ENCODE measurements at regions of chr15 and their contacts with region 1.

Region 1: DNA sequence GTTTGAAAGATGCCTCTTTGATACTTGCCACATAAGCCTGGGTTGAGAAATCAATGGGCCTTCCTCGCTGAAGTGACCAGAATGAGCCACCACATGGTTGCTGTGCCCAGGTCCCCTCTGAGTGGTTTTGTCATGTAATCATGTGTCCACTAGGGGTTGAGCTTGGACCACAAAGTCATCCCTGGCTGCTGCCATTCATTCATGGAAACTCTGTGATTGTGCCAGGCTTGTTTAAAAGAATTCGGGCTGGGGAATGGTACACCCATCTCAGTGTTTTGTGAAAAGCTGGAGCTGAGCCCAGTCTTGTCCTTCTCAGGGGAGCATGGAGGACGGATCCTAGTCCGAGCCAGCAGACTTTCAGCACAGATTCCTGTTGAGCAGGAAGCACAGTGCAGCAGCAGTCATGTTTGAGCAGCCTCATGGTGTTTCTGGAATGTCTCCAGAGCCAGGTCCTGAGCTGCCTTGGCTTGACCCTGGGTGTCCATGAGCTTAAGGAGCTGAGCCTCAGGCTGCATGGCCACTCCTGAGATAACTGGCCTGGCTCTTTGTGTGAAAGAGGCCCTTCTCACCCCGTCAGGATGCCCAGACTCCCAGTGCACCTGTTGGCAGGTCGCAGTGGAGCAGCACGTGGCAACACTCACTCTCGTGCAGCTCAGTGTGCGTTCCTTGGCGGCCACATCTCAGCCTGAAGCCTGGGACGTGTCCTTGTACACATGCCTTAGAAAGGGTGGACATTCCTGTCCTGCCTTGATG is 260.3 kb upstream of the TPM1 start:
- DNase-seq: peak; percentile 71 to 92 (median 89)
- ATAC-seq: peak; percentile 90 to 93 (median 92)
- H3K4me3 ChIP-seq: no peak overlapping the region
- H3K27ac ChIP-seq: peak overlapping the region; percentile 27 to 88 (median 71)
- H3K4me1 ChIP-seq: peaks cover 3 to 57% (median 40%) of the 10 kb centered on the region in 12 donors
- H3K27me3 ChIP-seq: no peaks in the 10 kb centered on the region
- CTCF ChIP-seq: peak; percentile 51 to 83 (median 73)
- POLR2A ChIP-seq: no peak

Region 2: DNA sequence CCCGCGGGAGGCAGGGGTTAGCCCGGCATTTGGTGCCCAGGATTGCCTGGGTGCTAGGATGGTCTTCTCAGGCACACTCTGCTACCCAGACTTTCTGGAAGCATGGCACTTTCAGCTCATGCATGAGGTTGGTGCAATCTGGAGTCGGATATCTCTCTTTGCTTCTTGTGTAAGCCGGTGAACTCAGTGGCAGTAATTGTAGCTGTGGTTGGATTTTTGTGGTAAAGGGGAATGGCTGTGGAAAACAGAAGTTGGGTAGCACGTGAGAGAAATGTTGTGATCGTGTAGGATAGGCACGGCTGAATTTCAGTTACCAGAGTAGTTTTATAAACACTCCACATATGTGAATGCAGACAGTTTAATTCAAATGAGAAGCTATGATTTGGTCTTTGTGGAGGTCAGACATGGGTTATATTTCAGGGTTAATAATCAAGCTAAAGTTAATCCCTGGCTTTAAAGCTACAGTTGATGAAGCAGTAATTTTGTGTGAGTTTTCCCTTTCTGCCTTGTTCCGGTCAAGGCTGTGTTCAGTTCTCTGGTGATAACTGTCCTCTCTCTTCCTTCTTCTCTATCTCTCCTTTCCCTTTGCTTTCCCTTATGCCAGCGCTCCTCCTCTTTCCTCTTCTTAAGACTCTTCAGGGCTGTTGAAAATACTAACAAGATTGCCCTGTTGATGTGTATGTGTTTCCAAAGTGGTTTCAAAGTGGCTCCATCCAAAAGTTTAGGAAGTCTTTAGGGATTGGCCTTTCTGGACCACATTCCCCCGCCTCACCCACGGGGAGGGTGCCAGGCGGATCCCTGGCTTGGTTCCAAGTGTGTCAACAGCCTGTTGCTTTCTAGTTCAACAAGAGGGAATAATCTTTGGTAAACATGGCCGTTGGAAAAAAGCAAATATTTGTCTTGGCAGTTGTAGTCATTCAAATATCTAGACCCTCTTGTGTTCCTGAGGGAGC is 212.5 kb before region 1 on chr15:
- intact Hi-C with region 1: no loop called
- DNase-seq: peak; percentile 39 to 74 (median 68)
- ATAC-seq: peak in 3 of 4 donors; percentile 31 to 61 (median 32)
- H3K4me3 ChIP-seq: no peak overlapping the region
- H3K27ac ChIP-seq: peak overlapping the region in 3 of 12 donors; percentile 1 to 9 (median 1)
- H3K4me1 ChIP-seq: peaks cover 0 to 34% (median 15%) of the 10 kb centered on the region in 12 donors
- H3K27me3 ChIP-seq: no peaks in the 10 kb centered on the region
- CTCF ChIP-seq: no peak
- POLR2A ChIP-seq: no peak

Region 3: DNA sequence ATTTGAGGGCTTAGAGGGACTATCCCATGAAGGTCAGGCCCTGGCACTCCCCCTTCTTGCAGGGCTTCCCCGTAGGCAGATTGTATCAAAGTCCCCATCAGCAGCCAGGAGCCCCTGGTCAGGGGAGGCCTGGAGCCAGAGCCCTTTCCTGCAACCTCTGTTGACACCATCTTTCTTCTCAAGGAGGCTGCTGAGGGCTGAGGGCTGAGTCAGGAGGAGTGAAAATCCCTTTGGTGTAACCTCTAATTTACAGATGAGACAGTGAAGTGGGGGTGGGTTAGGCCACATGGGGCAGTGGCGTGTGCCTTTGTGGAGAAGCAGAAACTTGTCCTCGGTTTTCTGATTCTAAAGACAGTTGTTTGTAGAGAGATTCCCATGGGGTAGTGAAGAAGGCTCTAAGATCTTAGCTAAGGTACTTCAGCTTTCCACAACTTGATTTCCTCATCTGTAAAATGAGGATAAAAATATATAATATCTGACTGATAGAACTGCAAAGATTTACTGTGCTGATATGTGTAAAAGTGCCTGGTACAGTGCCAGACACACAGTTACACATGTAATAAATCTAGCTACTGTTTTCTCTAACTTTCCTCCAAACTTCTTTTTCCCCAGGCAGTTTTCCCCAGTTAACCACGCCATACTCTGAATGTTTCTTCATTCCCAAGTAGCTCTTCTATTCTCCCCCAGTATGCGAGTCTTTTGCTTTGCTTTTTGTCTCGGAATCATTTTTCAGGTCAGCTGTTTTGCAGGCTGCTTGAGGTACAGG is 11.0 kb after region 1 on chr15:
- intact Hi-C with region 1: no loop called
- DNase-seq: no peak
- ATAC-seq: no peak
- H3K4me3 ChIP-seq: no peak overlapping the region
- H3K27ac ChIP-seq: no peak overlapping the region
- H3K4me1 ChIP-seq: peaks cover 0 to 12% (median 0%) of the 10 kb centered on the region in 12 donors
- H3K27me3 ChIP-seq: no peaks in the 10 kb centered on the region
- CTCF ChIP-seq: no peak
- POLR2A ChIP-seq: no peak

Region 4: GRCh38 chr15:62809112-62809967 is 27.1 kb after region 1 on chr15:
- intact Hi-C with region 1: loop called in 1 of 10 experiments (anchors 2 kb)
- DNase-seq: no peak
- ATAC-seq: no peak
- H3K4me3 ChIP-seq: no peak overlapping the region
- H3K27ac ChIP-seq: no peak overlapping the region
- H3K4me1 ChIP-seq: peaks cover 0 to 5% (median 0%) of the 10 kb centered on the region in 12 donors
- H3K27me3 ChIP-seq: no peaks in the 10 kb centered on the region
- CTCF ChIP-seq: no peak
- POLR2A ChIP-seq: no peak

Region 5: GRCh38 chr15:62847900-62848489 is 65.8 kb after region 1 on chr15:
- intact Hi-C with region 1: loop called in 8 of 10 experiments (anchors 2 to 10 kb)
- DNase-seq: peak; percentile 64 to 84 (median 75)
- ATAC-seq: peak; percentile 35 to 80 (median 73)
- H3K4me3 ChIP-seq: no peak overlapping the region
- H3K27ac ChIP-seq: peak overlapping the region in 3 of 12 donors; percentile 3 to 58 (median 44)
- H3K4me1 ChIP-seq: peaks cover 0 to 48% (median 15%) of the 10 kb centered on the region in 12 donors
- H3K27me3 ChIP-seq: no peaks in the 10 kb centered on the region
- CTCF ChIP-seq: peak; percentile 71 to 84 (median 76)
- POLR2A ChIP-seq: no peak

Region 6: GRCh38 chr15:62928242-62928995 is 146.2 kb after region 1 on chr15:
- intact Hi-C with region 1: loop called in 1 of 10 experiments (anchors 10 kb)
- DNase-seq: peak; percentile 47 to 66 (median 55)
- ATAC-seq: peak; percentile 52 to 90 (median 88)
- H3K4me3 ChIP-seq: no peak overlapping the region
- H3K27ac ChIP-seq: peak overlapping the region in 7 of 12 donors; percentile 19 to 73 (median 49)
- H3K4me1 ChIP-seq: peaks cover 0 to 38% (median 13%) of the 10 kb centered on the region in 12 donors
- H3K27me3 ChIP-seq: no peaks in the 10 kb centered on the region
- CTCF ChIP-seq: peak in 6 of 12 donors; percentile 13 to 42 (median 28)
- POLR2A ChIP-seq: no peak

Region 7: GRCh38 chr15:63048115-63048775 is 266.0 kb after region 1 on chr15:
- intact Hi-C with region 1: loop called in 9 of 10 experiments (anchors 2 to 10 kb)
- DNase-seq: peak; percentile 90 to 95 (median 91)
- ATAC-seq: peak; percentile 28 to 83 (median 62)
- H3K4me3 ChIP-seq: peak overlapping the region; percentile 62 to 95 (median 84)
- H3K27ac ChIP-seq: peak overlapping the region; percentile 91 to 99 (median 96)
- H3K4me1 ChIP-seq: peaks cover 0 to 85% (median 49%) of the 10 kb centered on the region in 12 donors
- H3K27me3 ChIP-seq: peaks cover 0 to 40% (median 0%) of the 10 kb centered on the region in 9 donors
- CTCF ChIP-seq: peak; percentile 79 to 98 (median 91)
- POLR2A ChIP-seq: peak; percentile 24 to 96

Region 8: GRCh38 chr15:63402498-63403253 is 620.5 kb after region 1 on chr15:
- intact Hi-C with region 1: loop called in 1 of 10 experiments (anchors 10 kb)
- DNase-seq: no peak
- ATAC-seq: peak; percentile 26 to 47 (median 33)
- H3K4me3 ChIP-seq: no peak overlapping the region
- H3K27ac ChIP-seq: no peak overlapping the region
- H3K4me1 ChIP-seq: peaks cover 0 to 13% (median 0%) of the 10 kb centered on the region in 12 donors
- H3K27me3 ChIP-seq: no peaks in the 10 kb centered on the region
- CTCF ChIP-seq: peak; percentile 51 to 78 (median 68)
- POLR2A ChIP-seq: no peak

Measured in heart left ventricle (tissue), 16 donors.